Head of caudate nucleus (tissue), 42 donors: ENCODE measurements at regions of chr12 and their contacts with region 1.

Region 1: GRCh38 chr12:106986625-106987430 is at the start of gene MTERF2:
- DNase-seq: peak; percentile 84 to 98 (median 94)

Region 2: GRCh38 chr12:106774005-106774807 is 212.6 kb before region 1 on chr12 and contains the start of gene RIC8B:
- intact Hi-C with region 1: loop called (anchors 10 kb)
- DNase-seq: peak; percentile 92 to 99 (median 98)

Region 3: GRCh38 chr12:106955377-106956047 is 31.3 kb before region 1 on chr12 and contains the start of gene TMEM263:
- intact Hi-C with region 1: loop called (anchors 2 kb)
- DNase-seq: peak; percentile 67 to 96 (median 90)

Region 4: GRCh38 chr12:107093417-107094182 is 106.8 kb after region 1 on chr12 and contains the start of gene CRY1:
- intact Hi-C with region 1: loop called (anchors 5 kb)
- DNase-seq: peak; percentile 90 to 98 (median 96)